PC-3 (cell line): ENCODE measurements at regions of chr15 and their contacts with region 1.

Region 1: DNA sequence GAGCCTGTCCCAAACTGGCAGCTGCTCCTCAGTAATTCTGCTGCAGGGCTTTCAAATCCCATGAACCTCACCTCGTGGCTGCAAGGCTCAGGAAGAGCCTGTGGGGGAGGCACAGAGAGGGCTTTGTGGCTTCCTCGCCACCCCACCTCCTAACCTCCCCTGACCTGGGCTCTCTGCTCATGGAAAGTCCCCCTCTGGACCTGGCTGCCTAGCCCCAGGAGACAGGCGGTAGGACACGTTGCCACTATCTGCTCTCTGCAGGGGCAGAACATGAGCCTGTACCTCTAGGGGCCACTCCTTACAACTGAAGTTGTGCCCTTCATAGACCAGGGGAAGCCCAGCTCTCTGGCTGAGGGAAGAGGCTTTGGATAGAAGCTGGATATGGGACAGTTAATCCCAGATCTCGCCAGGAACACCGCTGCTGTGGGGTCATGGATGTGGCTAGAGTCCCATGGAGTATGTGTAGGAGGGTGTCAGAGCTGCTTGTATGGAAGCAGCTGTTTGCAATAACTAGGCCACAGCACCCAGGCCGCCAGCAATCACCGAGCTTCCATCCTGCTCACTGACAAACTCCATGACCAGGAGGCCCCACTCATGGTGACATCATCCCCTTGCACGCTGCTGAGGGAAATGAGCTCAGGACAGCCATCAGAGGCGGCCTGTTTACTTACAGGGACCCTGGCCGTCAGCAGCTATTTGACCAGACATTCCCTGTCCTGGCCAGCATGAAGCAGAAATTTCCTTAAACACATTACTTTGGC is 34.0 kb upstream of the CILP start:
- DNase-seq: no peak
- ATAC-seq: no peak
- H3K4me3 ChIP-seq: no peak overlapping the region
- H3K27ac ChIP-seq: no peak overlapping the region
- H3K4me1 ChIP-seq: no peaks in the 10 kb centered on the region
- H3K27me3 ChIP-seq: no peaks in the 10 kb centered on the region
- CTCF ChIP-seq: no peak

Region 2: DNA sequence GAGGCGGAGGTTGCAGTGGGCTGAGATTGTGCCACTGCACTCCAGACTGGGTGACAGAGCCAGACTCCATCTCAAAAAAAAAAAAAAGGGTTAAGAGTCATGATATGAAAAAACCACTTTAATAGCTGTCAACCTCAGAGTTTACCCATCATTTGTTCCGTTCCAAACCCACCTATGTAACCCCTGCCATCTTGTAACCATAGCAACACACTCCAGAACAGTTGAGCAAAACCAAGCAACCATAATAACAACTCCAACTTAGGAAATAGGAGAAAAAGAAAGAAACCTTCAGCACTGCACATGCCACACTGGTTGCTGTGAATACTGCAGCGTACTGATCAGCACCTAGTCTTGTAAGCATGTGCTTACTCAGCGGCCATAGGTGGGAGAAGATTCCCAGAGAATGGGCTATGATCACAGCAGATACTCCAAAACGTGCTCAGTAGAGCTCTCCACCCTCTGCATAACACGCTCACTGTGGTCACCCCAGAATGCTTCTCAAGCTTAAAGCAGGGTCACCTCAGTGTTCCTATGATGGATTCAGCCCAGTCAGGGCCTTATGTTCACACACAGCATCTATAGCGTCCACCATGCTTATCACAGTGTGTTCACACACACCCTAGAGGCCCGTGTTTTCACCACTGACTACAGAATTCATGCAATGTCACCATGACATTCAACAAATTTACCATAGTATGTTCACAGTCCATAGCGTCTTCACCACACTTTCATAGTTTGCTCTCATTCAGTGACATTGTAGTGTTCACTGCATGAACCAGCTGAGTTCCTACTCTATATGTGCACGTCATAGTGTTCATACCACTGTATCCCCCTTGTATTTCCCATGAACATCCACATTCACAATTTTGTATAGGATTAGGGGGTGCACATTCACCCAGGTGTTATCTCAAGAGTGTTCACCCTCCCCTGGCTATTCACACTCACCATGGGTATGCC is 27.5 kb before region 1 on chr15:
- CTCF ChIA-PET with region 1: interaction called, 10 read pairs
- POLR2A ChIA-PET with region 1: no interaction called
- intact Hi-C with region 1: no loop called
- DNase-seq: no peak
- ATAC-seq: no peak
- H3K4me3 ChIP-seq: no peak overlapping the region
- H3K27ac ChIP-seq: no peak overlapping the region
- H3K4me1 ChIP-seq: no peaks in the 10 kb centered on the region
- H3K27me3 ChIP-seq: no peaks in the 10 kb centered on the region
- CTCF ChIP-seq: no peak

Region 3: DNA sequence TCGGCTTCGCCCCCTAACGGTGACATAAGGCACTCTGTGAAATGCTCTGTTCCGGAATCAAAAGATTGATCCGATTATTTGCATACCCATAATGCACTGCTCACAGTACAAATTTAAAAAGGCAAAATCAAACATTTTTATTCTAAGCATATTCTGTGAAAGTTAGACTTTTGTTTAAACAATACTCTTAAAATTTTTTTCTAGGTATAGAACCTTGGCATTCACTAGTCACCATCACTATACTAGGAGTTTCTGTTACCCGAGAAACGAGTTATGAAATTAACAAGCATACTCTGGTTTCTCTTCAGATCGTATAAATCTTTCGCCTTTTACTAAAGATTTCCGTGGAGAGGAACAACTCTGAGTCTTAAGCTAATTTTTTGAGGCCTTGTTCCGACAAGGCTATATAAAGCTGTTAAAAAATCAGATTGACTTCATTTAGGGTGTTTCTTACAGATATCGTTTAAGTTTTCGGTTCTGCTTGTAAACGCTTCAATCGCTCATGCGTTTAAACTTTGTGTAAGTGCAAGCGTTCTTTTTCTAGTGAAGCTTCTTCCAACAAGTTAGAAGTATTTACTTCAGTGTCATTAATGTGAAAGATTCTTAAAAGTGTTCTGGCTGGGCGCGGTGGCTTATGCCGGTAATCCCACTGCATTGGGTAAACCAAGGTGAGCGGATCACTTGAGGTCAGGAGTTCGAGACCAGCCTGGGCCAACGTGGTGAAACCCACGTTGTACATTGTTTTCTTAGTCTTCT is 59.3 kb after region 1 on chr15 and contains the start of gene RNU5B-1:
- CTCF ChIA-PET with region 1: no interaction called
- POLR2A ChIA-PET with region 1: no interaction called
- intact Hi-C with region 1: no loop called
- DNase-seq: peak; percentile 91
- ATAC-seq: peak; percentile 79
- H3K4me3 ChIP-seq: peak within 1 kb of the TSS; percentile 70
- H3K27ac ChIP-seq: peak within 1 kb of the TSS; percentile 87
- H3K4me1 ChIP-seq: no peaks in the 10 kb centered on the region; the same call in 1 of the 2 replicates
- H3K27me3 ChIP-seq: no peaks in the 10 kb centered on the region
- CTCF ChIP-seq: no peak; the same call in 1 of the 2 replicates
- total RNA-seq, gene RNU5B-1: not detected in 2 replicates